Caco-2 (cell line): ENCODE measurements at regions of chr17 and their contacts with region 1.

Region 1: DNA sequence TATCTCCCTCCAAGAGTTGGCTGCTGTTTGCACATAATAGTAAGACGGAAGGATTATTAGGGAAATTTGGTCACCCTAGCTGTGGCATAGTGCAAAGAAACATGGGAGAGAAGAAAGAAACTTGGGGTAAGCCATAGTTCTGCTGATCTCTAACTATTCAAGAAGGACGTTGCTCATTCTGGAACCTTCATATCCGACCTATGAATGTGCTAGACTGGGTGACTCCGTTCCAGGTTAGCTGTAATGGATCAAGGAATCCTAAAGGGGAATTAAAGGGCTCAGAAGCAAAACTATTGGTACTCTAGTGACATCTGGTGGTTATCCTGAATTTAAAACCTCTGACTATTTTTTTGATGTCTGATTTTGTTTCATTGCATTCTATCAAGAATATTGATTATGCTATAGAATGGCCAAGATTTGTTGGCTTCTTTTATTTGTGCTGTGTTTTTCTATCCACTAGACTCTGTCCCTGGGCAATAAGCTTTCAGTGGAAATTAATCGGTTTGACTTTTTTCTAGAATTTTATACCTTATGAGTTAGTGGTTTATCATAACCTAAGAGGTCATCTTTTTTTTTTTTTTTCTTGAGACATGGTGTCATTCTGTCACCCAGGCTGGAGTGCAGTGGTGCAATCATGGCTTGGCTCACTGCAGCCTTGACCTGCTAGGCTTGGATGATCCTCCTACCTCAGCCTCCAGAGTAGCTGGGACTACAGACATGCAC is 19.5 kb downstream of the PCTP start:
- DNase-seq: peak in 1 of 2 experiments; percentile 38
- H3K4me3 ChIP-seq: no peak overlapping the region
- H3K4me3 Mint-ChIP-seq: no peak overlapping the region
- H3K27ac Mint-ChIP-seq: no peak overlapping the region
- H3K4me1 ChIP-seq: no peaks in the 10 kb centered on the region
- H3K4me1 Mint-ChIP-seq: no peaks in the 10 kb centered on the region
- H3K27me3 ChIP-seq: no peaks in the 10 kb centered on the region
- H3K27me3 Mint-ChIP-seq: no peaks in the 10 kb centered on the region
- CTCF ChIP-seq: peak; percentile 30 to 72

Region 2: DNA sequence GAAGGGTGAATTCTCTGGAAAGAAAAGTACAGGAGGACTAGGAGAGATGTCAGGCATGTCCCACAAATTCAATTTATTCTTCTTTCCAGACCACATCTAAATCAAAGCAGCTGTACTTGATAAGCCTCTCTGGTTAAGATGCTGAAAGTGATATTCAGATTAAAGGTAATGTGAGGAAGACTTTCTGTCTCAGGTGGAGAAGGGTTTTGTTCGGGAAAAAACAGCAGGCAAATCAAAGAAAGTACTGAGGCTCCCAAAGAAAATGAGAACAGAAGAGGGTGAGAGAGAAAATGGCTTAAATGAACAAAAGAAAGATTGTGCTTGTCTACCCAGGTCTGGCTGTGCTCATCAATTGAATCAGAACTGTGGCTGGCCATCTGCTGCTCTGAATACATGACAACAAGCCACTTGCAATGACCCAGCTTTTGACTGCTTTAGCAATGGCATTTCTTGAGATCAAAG is 404.3 kb before region 1 on chr17:
- CTCF ChIA-PET with region 1: no interaction called
- POLR2A ChIA-PET with region 1: no interaction called
- intact Hi-C with region 1: no loop called
- DNase-seq: no peak
- H3K4me3 ChIP-seq: no peak overlapping the region
- H3K4me3 Mint-ChIP-seq: no peak overlapping the region
- H3K27ac Mint-ChIP-seq: no peak overlapping the region
- H3K4me1 ChIP-seq: no peaks in the 10 kb centered on the region
- H3K4me1 Mint-ChIP-seq: no peaks in the 10 kb centered on the region
- H3K27me3 ChIP-seq: no peaks in the 10 kb centered on the region
- H3K27me3 Mint-ChIP-seq: no peaks in the 10 kb centered on the region
- CTCF ChIP-seq: no peak

Region 3: GRCh38 chr17:55549140-55549539 is 221.2 kb before region 1 on chr17:
- CTCF ChIA-PET with region 1: interaction called, 4 read pairs
- POLR2A ChIA-PET with region 1: no interaction called
- intact Hi-C with region 1: loop called (anchors 5 kb)
- DNase-seq: peak in 1 of 2 experiments; percentile 16
- H3K4me3 ChIP-seq: no peak overlapping the region
- H3K4me3 Mint-ChIP-seq: no peak overlapping the region
- H3K27ac Mint-ChIP-seq: no peak overlapping the region
- H3K4me1 ChIP-seq: no peaks in the 10 kb centered on the region
- H3K4me1 Mint-ChIP-seq: no peaks in the 10 kb centered on the region
- H3K27me3 ChIP-seq: no peaks in the 10 kb centered on the region; the same call in 1 of the 2 replicates
- H3K27me3 Mint-ChIP-seq: peaks cover 45% of the 10 kb centered on the region
- CTCF ChIP-seq: peak in 1 of 2 experiments; percentile 36

Region 4: DNA sequence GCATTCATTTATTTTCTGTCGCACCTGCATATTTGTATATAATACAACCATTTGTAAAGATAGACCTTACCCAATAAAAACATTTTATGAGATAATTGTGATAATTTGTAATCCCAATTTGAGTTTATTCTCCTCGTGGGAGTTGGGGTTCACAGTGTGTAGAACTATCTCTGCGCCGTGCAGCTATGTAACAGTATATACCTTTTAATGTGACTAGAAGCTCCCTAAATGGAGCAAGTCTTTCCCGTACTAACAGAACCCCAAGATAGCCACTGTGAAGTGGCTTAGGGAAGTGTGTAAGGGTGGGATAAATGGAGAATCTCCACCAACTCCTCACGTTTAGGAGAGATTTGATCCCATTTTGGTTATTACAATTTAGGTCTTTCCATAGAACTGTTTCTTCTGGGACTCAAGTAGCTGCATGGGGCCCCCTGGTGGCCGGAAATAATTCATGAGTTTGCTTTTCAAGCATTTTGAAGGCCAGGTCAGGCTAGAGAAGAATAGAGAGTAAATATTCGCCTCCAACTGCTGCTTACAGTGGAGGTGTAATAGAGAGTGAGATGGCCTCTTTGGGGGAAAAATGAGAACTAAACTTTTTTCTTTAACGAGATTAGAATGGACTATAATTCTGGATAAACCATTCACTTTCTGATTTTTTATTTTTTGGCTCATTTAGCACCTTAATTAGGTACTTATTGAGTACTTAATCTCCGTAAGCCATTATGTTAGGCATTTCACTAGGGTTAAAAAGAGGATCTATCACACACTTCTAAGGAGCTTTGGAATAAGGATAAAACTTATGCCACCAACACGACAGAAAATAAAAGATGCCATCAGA is 52.2 kb before region 1 on chr17:
- CTCF ChIA-PET with region 1: interaction called, 3 read pairs
- POLR2A ChIA-PET with region 1: no interaction called
- intact Hi-C with region 1: loop called (anchors 1 kb)
- DNase-seq: peak; percentile 69 to 79
- H3K4me3 ChIP-seq: no peak overlapping the region
- H3K4me3 Mint-ChIP-seq: no peak overlapping the region
- H3K27ac Mint-ChIP-seq: no peak overlapping the region
- H3K4me1 ChIP-seq: no peaks in the 10 kb centered on the region
- H3K4me1 Mint-ChIP-seq: no peaks in the 10 kb centered on the region
- H3K27me3 ChIP-seq: no peaks in the 10 kb centered on the region; the same call in 1 of the 2 replicates
- H3K27me3 Mint-ChIP-seq: peaks cover 20% of the 10 kb centered on the region
- CTCF ChIP-seq: peak; percentile 79 to 90

Region 5: GRCh38 chr17:55750750-55751657 is 19.3 kb before region 1 on chr17 and contains the start of gene PCTP:
- CTCF ChIA-PET with region 1: interaction called, 10 read pairs
- POLR2A ChIA-PET with region 1: no interaction called
- intact Hi-C with region 1: no loop called
- DNase-seq: peak; percentile 95 to 97
- H3K4me3 ChIP-seq: peak within 1 kb of the TSS; percentile 63
- H3K4me3 Mint-ChIP-seq: peak within 1 kb of the TSS; percentile 88
- H3K27ac Mint-ChIP-seq: peak within 1 kb of the TSS; percentile 15
- H3K4me1 ChIP-seq: 0 out of 2 replicates have a peak, but pooled peaks cover 6% of the 10 kb centered on the region
- H3K4me1 Mint-ChIP-seq: peaks cover 14% of the 10 kb centered on the region
- H3K27me3 ChIP-seq: no peaks in the 10 kb centered on the region
- H3K27me3 Mint-ChIP-seq: peaks cover 6% of the 10 kb centered on the region
- CTCF ChIP-seq: peak; percentile 42 to 62
- total RNA-seq, gene PCTP: 15.7 and 16.7 TPM in 2 replicates